B cell (primary cell): ENCODE measurements at regions of chr10 and their contacts with region 1.

Region 1: DNA sequence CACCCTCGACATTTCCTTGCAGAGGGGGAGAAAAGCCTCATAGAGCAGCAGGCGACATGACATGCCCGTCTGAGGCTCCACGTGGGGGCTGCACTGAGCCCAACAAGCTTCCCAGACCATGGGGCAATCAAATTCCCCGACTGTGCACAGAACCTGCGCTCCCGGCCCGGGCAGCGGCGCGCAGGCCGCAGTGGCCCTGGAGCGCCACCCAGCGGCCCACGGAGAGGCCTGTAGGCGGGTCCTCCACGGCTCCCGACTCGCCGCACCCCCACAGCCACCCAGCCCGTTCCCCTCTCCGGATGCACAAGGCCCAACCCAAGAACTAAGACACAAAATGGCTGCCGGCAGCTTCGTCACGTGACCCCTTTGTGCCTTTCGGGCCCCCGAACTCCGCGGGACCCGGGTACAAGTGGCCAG is 816 bp downstream of the EPC1 start:
- DNase-seq: peak; percentile 97
- ATAC-seq: peak; percentile 84
- H3K4me3 ChIP-seq: peak overlapping the region; percentile 82 to 100 (median 98)
- H3K4me3 Mint-ChIP-seq: peak overlapping the region; percentile 97
- H3K27ac ChIP-seq: peak overlapping the region; percentile 99 to 100
- H3K27ac Mint-ChIP-seq: peak overlapping the region; percentile 100
- H3K4me1 ChIP-seq: peaks cover 38 to 51% of the 10 kb centered on the region in 2 donors
- H3K4me1 Mint-ChIP-seq: peaks cover 69% of the 10 kb centered on the region
- H3K27me3 ChIP-seq: no peaks in the 10 kb centered on the region
- H3K27me3 Mint-ChIP-seq: no peaks in the 10 kb centered on the region
- CTCF ChIP-seq: peak; percentile 94

Region 2: DNA sequence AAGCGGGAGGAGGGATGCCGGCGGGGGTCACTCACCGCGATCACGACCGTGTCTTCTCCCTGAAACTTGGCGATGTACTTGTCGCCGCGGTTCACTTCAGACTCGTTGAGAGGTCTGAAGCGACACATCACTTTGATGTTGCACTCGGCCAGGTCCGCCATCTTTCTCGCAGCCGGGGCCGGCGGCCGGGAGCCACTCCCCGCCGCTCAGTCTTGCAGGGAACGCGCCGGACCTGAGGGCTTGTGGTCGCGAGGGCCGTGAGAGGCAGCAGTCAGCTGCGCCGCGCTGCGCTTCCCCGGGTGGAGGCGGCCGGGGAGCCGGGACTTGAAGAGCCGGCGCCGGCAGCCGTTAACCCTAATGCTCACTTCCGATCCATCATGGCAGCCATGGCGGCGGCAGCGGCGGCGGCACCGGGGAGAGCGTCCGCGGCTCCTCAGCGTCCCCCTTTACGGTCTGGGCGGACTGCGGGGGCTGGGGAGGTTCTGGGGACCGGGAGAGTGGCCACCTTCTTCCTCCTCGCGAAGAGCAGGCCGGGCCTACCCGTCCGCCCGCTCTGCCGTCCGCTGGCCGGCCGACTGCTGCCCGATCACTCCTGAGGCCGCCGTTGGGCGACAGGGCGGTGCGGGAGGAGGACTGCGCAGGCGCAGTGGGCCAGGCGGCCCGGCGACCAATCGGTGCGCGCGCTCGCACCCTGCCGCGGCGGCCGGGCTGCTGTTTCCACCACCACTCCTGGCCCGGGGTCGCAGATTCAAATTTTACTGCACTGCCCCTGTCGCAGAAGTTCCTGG is 290.1 kb before region 1 on chr10 and contains the start of gene KIF5B:
- CTCF ChIA-PET with region 1: no interaction called
- POLR2A ChIA-PET with region 1: no interaction called
- intact Hi-C with region 1: loop called (anchors 1 kb)
- DNase-seq: peak; percentile 93
- ATAC-seq: peak; percentile 85
- H3K4me3 ChIP-seq: peak within 1 kb of the TSS; percentile 64 to 97 (median 85)
- H3K4me3 Mint-ChIP-seq: peak within 1 kb of the TSS; percentile 98
- H3K27ac ChIP-seq: peak within 1 kb of the TSS; percentile 80 to 90
- H3K27ac Mint-ChIP-seq: peak within 1 kb of the TSS; percentile 97
- H3K4me1 ChIP-seq: peaks cover 31 to 47% of the 10 kb centered on the region in 2 donors
- H3K4me1 Mint-ChIP-seq: peaks cover 53% of the 10 kb centered on the region
- H3K27me3 ChIP-seq: no peaks in the 10 kb centered on the region
- H3K27me3 Mint-ChIP-seq: no peaks in the 10 kb centered on the region
- CTCF ChIP-seq: no peak
- total RNA-seq, gene KIF5B: 40.1 and 44.1 TPM in 2 replicates

Region 3: DNA sequence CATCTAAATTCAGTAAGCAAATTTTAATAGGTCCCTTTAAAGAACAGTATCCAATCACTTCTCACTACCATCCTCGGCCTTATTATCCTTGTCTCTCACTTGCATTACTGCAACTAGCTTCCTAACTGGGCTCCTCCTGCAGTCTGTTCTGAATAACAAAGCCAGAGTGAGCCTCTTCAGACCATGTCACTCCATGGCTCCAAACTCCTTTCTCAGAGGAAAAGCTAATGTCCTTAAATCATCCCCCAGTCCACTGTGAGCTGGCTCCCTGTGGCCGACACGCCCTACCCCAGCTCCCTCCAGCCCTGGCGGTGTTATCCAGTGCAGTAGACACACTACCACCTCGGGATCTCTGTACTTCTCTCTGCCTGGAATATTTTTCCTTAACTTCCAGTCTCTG is 79.2 kb before region 1 on chr10:
- CTCF ChIA-PET with region 1: interaction called, 3 read pairs
- POLR2A ChIA-PET with region 1: no interaction called
- intact Hi-C with region 1: loop called (anchors 1 kb)
- DNase-seq: no peak
- ATAC-seq: no peak
- H3K4me3 ChIP-seq: no peak overlapping the region
- H3K4me3 Mint-ChIP-seq: no peak overlapping the region
- H3K27ac ChIP-seq: no peak overlapping the region
- H3K27ac Mint-ChIP-seq: peak overlapping the region; percentile 46
- H3K4me1 ChIP-seq: no peaks in the 10 kb centered on the region
- H3K4me1 Mint-ChIP-seq: no peaks in the 10 kb centered on the region
- H3K27me3 ChIP-seq: no peaks in the 10 kb centered on the region
- H3K27me3 Mint-ChIP-seq: no peaks in the 10 kb centered on the region
- CTCF ChIP-seq: no peak

Region 4: GRCh38 chr10:32326119-32326518 is 20.0 kb before region 1 on chr10:
- CTCF ChIA-PET with region 1: interaction called, 13 read pairs
- POLR2A ChIA-PET with region 1: no interaction called
- intact Hi-C with region 1: no loop called
- DNase-seq: no peak
- ATAC-seq: no peak
- H3K4me3 ChIP-seq: no peak overlapping the region
- H3K4me3 Mint-ChIP-seq: peak overlapping the region; percentile 65
- H3K27ac ChIP-seq: peak overlapping the region in 1 of 2 donors; percentile 32
- H3K27ac Mint-ChIP-seq: peak overlapping the region; percentile 59
- H3K4me1 ChIP-seq: peaks cover 57 to 77% of the 10 kb centered on the region in 2 donors
- H3K4me1 Mint-ChIP-seq: peaks cover 85% of the 10 kb centered on the region
- H3K27me3 ChIP-seq: no peaks in the 10 kb centered on the region
- H3K27me3 Mint-ChIP-seq: no peaks in the 10 kb centered on the region
- CTCF ChIP-seq: no peak

Region 5: GRCh38 chr10:32378363-32379317 is 32.5 kb after region 1 on chr10:
- CTCF ChIA-PET with region 1: interaction called, 8 read pairs
- POLR2A ChIA-PET with region 1: interaction called, 22 read pairs
- intact Hi-C with region 1: loop called (anchors 1 kb)
- DNase-seq: peak; percentile 90
- ATAC-seq: peak; percentile 95
- H3K4me3 ChIP-seq: peak overlapping the region; percentile 63 to 99 (median 83)
- H3K4me3 Mint-ChIP-seq: no peak overlapping the region
- H3K27ac ChIP-seq: peak overlapping the region; percentile 73 to 85
- H3K27ac Mint-ChIP-seq: no peak overlapping the region
- H3K4me1 ChIP-seq: peaks cover 10 to 23% of the 10 kb centered on the region in 2 donors
- H3K4me1 Mint-ChIP-seq: peaks cover 20% of the 10 kb centered on the region
- H3K27me3 ChIP-seq: no peaks in the 10 kb centered on the region
- H3K27me3 Mint-ChIP-seq: no peaks in the 10 kb centered on the region
- CTCF ChIP-seq: no peak

Region 6: GRCh38 chr10:32909456-32909855 is 563.3 kb after region 1 on chr10:
- CTCF ChIA-PET with region 1: no interaction called
- POLR2A ChIA-PET with region 1: no interaction called
- intact Hi-C with region 1: no loop called
- DNase-seq: no peak
- ATAC-seq: no peak
- H3K4me3 ChIP-seq: no peak overlapping the region
- H3K4me3 Mint-ChIP-seq: no peak overlapping the region
- H3K27ac ChIP-seq: no peak overlapping the region
- H3K27ac Mint-ChIP-seq: no peak overlapping the region
- H3K4me1 ChIP-seq: no peaks in the 10 kb centered on the region
- H3K4me1 Mint-ChIP-seq: no peaks in the 10 kb centered on the region
- H3K27me3 ChIP-seq: no peaks in the 10 kb centered on the region
- H3K27me3 Mint-ChIP-seq: no peaks in the 10 kb centered on the region
- CTCF ChIP-seq: no peak